Ascending aorta (tissue), 2 donors: ENCODE measurements at regions of chr2 and their contacts with region 1.

Region 1: GRCh38 chr2:239318790-239319661 is 81.8 kb downstream of the HDAC4 start:
- DNase-seq: peak in 1 of 2 donors; percentile 66
- H3K4me3 ChIP-seq: peak overlapping the region in 1 of 2 donors; percentile 0
- H3K27ac ChIP-seq: no peak overlapping the region
- H3K4me1 ChIP-seq: peaks cover 0 to 11% of the 10 kb centered on the region in 2 donors
- H3K27me3 ChIP-seq: no peaks in the 10 kb centered on the region
- CTCF ChIP-seq: no peak

Region 2: DNA sequence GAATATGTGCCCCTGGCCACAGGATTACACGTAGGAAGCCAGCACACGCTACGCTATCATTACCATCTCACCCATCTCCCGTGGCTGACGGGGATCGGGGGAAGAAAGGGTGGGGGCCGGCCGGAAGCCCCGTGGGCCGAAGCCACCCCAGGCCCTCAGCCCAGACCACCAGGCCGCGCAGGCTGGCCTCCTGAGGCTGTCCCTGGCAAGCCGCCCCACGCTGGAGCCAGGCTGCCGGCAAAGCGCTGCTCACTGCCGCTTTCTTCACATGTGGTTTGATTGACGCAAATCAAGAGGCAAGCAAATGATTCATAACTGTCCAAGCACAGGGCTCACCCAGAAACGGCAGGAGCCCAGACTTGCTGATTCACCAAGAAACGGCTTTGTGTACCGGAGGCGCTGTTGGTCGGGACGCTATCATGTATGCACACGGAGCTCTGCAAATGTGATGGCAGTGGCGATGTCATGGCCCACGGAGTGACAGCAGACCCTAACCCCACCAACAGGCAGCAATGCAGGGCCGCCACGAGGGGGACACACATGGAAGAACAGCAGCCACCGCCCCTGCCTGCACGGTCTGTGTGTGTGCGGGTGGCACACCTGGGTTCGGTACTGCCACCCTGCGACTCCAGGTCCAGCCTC is 43.9 kb before region 1 on chr2:
- intact Hi-C with region 1: loop called (anchors 5 kb)
- DNase-seq: peak; percentile 82 to 96
- H3K4me3 ChIP-seq: peak overlapping the region; percentile 18 to 50
- H3K27ac ChIP-seq: peak overlapping the region; percentile 68 to 81
- H3K4me1 ChIP-seq: peaks cover 13 to 32% of the 10 kb centered on the region in 2 donors
- H3K27me3 ChIP-seq: no peaks in the 10 kb centered on the region
- CTCF ChIP-seq: peak in 1 of 3 experiments; percentile 14